ENCODE measurements at regions of chr11 and their contacts with region 1.

Region 1: GRCh38 chr11:110290591-110291334 is 5.7 kb downstream of the RDX start:
- DNase-seq: no peak
- H3K4me3 Mint-ChIP-seq: no peak overlapping the region
- H3K27ac Mint-ChIP-seq: no peak overlapping the region
- H3K4me1 Mint-ChIP-seq: peaks cover 66% of the 10 kb centered on the region
- H3K27me3 Mint-ChIP-seq: no peaks in the 10 kb centered on the region

Region 2: GRCh38 chr11:110261195-110262140 is 29.3 kb before region 1 on chr11:
- CTCF ChIA-PET with region 1: no interaction called
- POLR2A ChIA-PET with region 1: interaction called, 14 read pairs
- DNase-seq: no peak
- H3K4me3 Mint-ChIP-seq: no peak overlapping the region
- H3K27ac Mint-ChIP-seq: no peak overlapping the region
- H3K4me1 Mint-ChIP-seq: no peaks in the 10 kb centered on the region
- H3K27me3 Mint-ChIP-seq: no peaks in the 10 kb centered on the region